Mucosa of descending colon (tissue), 3 donors: ENCODE measurements at regions of chr7 and their contacts with region 1.

Region 1: DNA sequence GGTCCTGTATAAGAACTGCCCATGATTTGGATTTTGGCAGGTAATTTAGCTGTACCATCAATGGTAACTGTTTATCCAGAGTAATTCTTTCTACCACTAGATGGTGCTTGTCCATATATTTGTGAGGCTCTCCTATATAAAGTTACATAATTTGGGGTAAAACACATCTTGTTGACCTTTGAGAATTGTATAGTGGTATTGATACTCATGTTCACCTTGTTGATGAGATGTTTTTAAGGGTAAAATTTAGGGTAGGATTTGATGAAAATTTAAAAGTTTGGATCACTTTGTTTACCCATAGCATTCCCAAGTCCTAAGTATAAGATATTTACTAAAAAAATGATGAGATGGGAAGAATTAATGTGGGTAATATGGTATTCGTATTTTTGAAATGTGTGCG is 31.6 kb downstream of the ST7 start:
- DNase-seq: no peak
- ATAC-seq: peak; percentile 36
- H3K4me3 ChIP-seq: no peak overlapping the region
- H3K4me1 ChIP-seq: no peaks in the 10 kb centered on the region
- CTCF ChIP-seq: peak; percentile 21

Region 2: GRCh38 chr7:116455009-116455408 is 529.9 kb before region 1 on chr7:
- intact Hi-C with region 1: no loop called
- DNase-seq: no peak
- ATAC-seq: no peak
- H3K4me3 ChIP-seq: no peak overlapping the region
- H3K4me1 ChIP-seq: no peaks in the 10 kb centered on the region
- CTCF ChIP-seq: no peak

Region 3: DNA sequence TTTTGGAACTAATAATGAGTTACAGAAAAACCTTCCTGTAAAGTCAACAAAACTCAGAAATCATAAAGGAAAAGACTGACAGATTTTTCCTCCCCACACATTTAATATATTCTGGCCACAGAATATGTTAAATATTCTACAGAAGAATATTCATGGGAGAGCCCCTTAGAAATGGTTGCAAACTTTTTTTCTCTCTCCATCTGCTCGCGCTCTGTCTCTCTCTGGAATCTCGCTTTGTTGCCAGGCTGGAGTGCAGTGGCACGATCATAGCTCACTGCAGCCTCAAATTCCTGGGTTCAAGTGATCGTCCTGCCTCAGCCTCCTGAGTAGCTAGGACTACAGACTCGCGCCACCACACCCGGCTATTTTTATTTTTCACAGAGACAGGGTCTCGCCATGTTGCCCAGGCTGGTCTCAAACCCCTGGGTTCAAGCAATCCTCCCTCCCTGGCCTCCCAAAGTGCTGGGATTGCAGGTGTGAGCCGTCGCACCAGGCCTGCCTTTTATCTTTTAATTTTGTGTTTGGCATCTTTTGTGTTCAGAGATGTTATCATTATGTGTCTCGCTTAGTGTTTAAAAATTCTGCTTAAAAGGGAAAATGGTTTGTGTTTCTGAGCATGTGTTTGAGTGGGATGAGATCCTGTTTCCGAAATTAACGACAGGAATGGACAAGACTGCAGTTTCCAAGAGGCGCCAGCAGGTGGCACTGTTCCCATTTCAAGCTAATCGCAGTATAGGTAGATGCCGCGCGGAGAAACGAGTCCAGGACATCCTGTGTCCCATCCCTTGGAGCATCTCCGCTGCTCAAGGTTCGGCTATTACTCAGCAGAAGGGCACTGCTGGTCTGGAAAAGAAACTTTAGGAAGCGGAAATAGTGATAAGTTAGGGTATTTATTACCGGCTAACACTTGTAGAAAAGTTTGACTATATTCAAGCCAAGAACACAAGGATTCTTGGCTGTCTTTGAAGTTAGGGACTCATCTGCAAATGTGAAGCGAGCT is 54.7 kb before region 1 on chr7:
- intact Hi-C with region 1: loop called in 1 of 2 experiments (anchors 5 kb)
- DNase-seq: peak; percentile 70 to 83 (median 81)
- ATAC-seq: peak; percentile 95
- H3K4me3 ChIP-seq: no peak overlapping the region
- H3K4me1 ChIP-seq: no peaks in the 10 kb centered on the region
- CTCF ChIP-seq: peak; percentile 88

Region 4: GRCh38 chr7:117119192-117119924 is 134.4 kb after region 1 on chr7:
- intact Hi-C with region 1: loop called (anchors 5 kb)
- DNase-seq: peak in 2 of 3 donors; percentile 77 to 91
- ATAC-seq: peak; percentile 74
- H3K4me3 ChIP-seq: no peak overlapping the region
- H3K4me1 ChIP-seq: peaks cover 2% of the 10 kb centered on the region
- CTCF ChIP-seq: peak; percentile 53